ENCODE measurements at regions of chr1 and their contacts with region 1.

Region 1: GRCh38 chr1:147242439-147243227 is at the start of gene CHD1L:
- DNase-seq: peak; percentile 99
- ATAC-seq: peak; percentile 98
- total RNA-seq, gene CHD1L: 8.3 TPM

Region 2: GRCh38 chr1:147172168-147172992 is 70.3 kb before region 1 on chr1 and contains the start of gene PRKAB2:
- intact Hi-C with region 1: loop called (anchors 2 kb)
- DNase-seq: peak; percentile 99
- ATAC-seq: peak; percentile 97
- total RNA-seq, gene PRKAB2: 44.7 TPM